Prostate gland (tissue), 2 donors: ENCODE measurements at regions of chr3 and their contacts with region 1.

Region 1: DNA sequence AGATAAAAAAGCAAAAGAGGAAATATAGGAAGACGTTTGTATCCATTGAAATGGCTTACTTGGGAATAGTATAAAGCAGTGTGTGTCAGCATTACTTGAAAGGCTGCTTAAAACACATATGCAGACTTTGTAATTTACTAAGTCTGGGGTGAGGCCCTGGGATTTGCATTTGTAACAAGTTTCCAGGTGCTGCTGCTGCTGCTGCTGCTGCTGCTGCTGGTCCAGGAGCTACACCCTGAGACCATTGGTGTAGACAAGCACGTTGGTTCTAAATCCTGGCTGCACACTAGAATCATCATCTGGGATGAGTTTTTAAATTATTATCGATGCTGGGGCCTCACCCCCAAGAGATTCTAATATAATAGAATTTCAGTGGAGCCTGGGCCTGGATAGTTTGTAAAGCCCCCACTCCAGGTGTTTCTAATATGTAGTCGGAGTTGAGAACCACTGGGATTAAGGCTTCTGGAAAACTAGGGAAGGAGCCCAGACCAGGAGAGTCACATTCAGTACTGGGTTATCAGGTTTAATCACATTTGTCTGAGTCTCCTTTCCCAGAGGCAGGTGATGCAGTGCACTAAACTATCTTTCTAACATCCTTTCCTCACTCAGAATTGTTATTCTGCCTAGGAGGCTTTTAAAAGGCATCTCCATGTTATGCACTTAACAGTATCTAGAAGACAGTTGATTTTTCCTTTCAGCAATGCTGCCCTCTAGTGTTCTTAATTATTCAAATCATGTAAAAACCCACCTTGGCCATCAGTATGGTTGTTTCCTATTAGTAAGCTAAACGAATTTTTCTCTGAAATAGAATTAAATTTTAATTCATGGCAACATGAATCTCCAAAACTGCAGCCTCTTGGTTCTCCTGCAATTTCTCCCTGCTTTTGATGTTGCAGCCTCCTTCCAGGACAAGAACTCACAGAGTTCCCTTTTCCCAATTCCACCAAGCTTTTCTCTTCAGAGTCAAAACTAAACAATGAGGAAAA is 45.4 kb downstream of the SSR3 start:
- DNase-seq: no peak
- H3K4me3 ChIP-seq: no peak overlapping the region
- H3K27ac ChIP-seq: no peak overlapping the region
- H3K4me1 ChIP-seq: no peaks in the 10 kb centered on the region
- H3K27me3 ChIP-seq: no peaks in the 10 kb centered on the region
- CTCF ChIP-seq: peak; percentile 55 to 72 (median 62)
- POLR2A ChIP-seq: no peak

Region 2: DNA sequence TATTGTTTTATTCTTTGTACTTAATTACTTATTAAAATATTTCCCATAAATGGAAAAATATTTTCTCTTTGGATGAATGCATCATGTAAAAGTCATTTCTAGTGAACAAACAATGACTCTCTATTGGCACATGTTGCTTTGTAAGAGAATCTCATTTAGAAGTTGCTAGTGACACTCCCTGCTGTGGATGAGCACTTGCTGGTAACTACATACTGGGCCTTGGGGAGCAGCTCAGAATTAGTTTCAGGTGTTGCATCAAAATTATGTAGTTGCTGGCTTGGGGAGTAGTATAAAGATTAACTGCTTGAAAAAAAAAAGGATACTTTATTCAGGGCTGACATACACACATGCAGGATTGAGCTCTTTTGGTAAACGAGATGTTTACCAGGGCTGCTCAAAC is 469.4 kb before region 1 on chr3:
- intact Hi-C with region 1: loop called (anchors 5 kb)
- DNase-seq: no peak
- H3K4me3 ChIP-seq: no peak overlapping the region
- H3K27ac ChIP-seq: no peak overlapping the region
- H3K4me1 ChIP-seq: no peaks in the 10 kb centered on the region
- H3K27me3 ChIP-seq: no peaks in the 10 kb centered on the region
- CTCF ChIP-seq: no peak
- POLR2A ChIP-seq: no peak

Region 3: DNA sequence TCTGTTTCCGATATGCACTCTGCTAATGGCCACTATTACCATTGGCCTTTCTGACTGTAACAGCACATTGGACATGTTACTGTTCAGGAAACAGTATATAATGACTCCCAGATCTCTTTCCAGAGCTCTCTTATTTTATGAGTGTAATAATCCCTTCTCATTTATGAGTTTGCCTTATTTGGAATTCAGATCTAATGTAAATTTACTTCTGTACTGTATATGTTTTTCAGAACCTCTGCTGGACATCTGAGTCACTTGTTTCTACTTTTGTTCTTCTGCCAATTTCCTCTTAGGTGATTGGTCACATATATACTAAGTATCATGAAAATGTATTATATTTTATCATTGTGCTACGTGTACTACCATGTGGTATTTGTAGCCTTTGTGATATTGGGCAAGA is 1630.9 kb after region 1 on chr3:
- intact Hi-C with region 1: no loop called
- DNase-seq: no peak
- H3K4me3 ChIP-seq: no peak overlapping the region
- H3K27ac ChIP-seq: no peak overlapping the region
- H3K4me1 ChIP-seq: no peaks in the 10 kb centered on the region
- H3K27me3 ChIP-seq: no peaks in the 10 kb centered on the region
- CTCF ChIP-seq: no peak
- POLR2A ChIP-seq: no peak